ENCODE measurements at regions of chr9 and their contacts with region 1.

Region 1: DNA sequence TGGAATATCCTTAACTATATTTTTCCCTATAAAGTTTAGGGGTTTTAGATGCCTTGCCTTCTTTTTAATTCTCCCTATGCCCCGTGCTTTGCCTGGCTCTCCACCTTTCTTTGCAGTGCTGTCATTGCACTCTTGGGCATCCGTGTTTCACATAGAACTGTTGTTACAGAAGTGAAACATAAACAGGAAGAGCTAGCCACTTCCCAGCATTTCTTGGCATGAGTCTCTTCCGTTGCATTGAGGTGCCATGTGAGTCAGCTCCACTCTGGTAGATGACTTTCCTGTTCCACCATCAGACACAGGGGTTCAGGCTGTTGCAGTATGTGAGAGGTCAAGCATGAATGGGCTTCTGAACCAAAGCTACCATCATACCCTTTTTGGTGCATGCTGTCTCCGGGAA is 73.4 kb downstream of the ANGPTL2 start:
- DNase-seq: peak; percentile 70 to 95
- H3K4me3 ChIP-seq: peak overlapping the region; percentile 38; the same call in 1 of the 2 replicates
- H3K27ac ChIP-seq: peak overlapping the region; percentile 86
- H3K4me1 ChIP-seq: peaks cover 35% of the 10 kb centered on the region
- H3K27me3 ChIP-seq: no peaks in the 10 kb centered on the region
- CTCF ChIP-seq: 0 out of 2 replicates have a peak, but pooled peaks have one; percentile 34

Region 2: GRCh38 chr9:126500684-126501382 is 548.2 kb before region 1 on chr9:
- CTCF ChIA-PET with region 1: no interaction called
- POLR2A ChIA-PET with region 1: no interaction called
- intact Hi-C with region 1: no loop called
- DNase-seq: peak; percentile 42 to 79
- H3K4me3 ChIP-seq: no peak overlapping the region
- H3K27ac ChIP-seq: no peak overlapping the region
- H3K4me1 ChIP-seq: no peaks in the 10 kb centered on the region
- H3K27me3 ChIP-seq: peaks cover 5% of the 10 kb centered on the region; the same call in 1 of the 2 replicates
- CTCF ChIP-seq: peak; percentile 93

Region 3: GRCh38 chr9:126902210-126902609 is 146.8 kb before region 1 on chr9:
- CTCF ChIA-PET with region 1: interaction called, 11 read pairs
- POLR2A ChIA-PET with region 1: no interaction called
- intact Hi-C with region 1: no loop called
- DNase-seq: no peak
- H3K4me3 ChIP-seq: no peak overlapping the region
- H3K27ac ChIP-seq: no peak overlapping the region
- H3K4me1 ChIP-seq: no peaks in the 10 kb centered on the region
- H3K27me3 ChIP-seq: no peaks in the 10 kb centered on the region
- CTCF ChIP-seq: no peak

Region 4: GRCh38 chr9:126947529-126947928 is 101.5 kb before region 1 on chr9:
- CTCF ChIA-PET with region 1: no interaction called
- POLR2A ChIA-PET with region 1: no interaction called
- intact Hi-C with region 1: no loop called
- DNase-seq: peak; percentile 50 to 61
- H3K4me3 ChIP-seq: no peak overlapping the region
- H3K27ac ChIP-seq: no peak overlapping the region
- H3K4me1 ChIP-seq: 0 out of 2 replicates have a peak, but pooled peaks cover 7% of the 10 kb centered on the region
- H3K27me3 ChIP-seq: no peaks in the 10 kb centered on the region
- CTCF ChIP-seq: peak; percentile 64

Region 5: DNA sequence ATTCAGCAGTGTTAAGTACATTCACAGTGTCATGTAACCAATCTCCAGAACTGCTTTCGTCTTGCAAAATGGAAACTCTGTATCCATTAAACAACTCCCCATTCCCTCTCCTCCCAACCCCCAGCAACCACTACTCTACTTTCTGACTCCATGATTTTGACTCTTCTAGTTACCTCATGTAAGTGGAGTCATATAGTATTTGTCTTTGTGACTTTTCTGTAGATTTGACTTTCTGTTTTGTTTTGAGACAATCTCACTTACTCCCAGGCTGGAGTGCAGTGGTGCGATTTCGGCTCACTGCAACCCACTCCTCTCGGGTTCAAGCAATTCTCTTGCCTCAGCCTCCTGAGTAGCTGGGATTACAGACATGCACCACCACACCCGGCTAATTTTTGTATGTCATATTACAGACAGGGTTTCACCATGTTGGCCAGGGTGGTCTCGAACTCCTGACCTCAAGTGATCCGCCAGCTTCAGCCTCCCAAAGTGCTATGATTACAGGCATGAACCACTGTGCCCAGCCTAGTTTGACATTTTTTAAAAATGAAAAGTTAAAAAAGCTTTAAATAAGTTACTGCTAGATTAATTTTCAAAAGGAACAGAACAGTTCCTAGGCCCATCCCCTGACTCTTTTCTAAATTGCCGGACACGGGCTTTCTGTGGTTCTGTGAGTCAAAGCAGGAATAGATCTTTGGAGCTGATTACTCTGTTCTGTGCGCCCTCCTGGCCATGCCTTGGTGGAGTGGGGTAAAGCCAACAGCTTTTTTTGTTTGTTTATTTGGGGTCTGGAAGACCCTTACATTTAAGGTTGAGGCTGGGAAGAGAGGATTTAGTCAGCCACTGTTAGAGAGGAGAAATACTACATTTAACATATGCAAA is 75.2 kb before region 1 on chr9:
- CTCF ChIA-PET with region 1: no interaction called
- POLR2A ChIA-PET with region 1: interaction called, 11 read pairs
- intact Hi-C with region 1: no loop called
- DNase-seq: no peak
- H3K4me3 ChIP-seq: no peak overlapping the region
- H3K27ac ChIP-seq: no peak overlapping the region
- H3K4me1 ChIP-seq: no peaks in the 10 kb centered on the region
- H3K27me3 ChIP-seq: no peaks in the 10 kb centered on the region
- CTCF ChIP-seq: no peak

Region 6: GRCh38 chr9:127014216-127014615 is 34.8 kb before region 1 on chr9:
- CTCF ChIA-PET with region 1: no interaction called
- POLR2A ChIA-PET with region 1: no interaction called
- intact Hi-C with region 1: no loop called
- DNase-seq: no peak
- H3K4me3 ChIP-seq: no peak overlapping the region
- H3K27ac ChIP-seq: no peak overlapping the region
- H3K4me1 ChIP-seq: no peaks in the 10 kb centered on the region
- H3K27me3 ChIP-seq: no peaks in the 10 kb centered on the region
- CTCF ChIP-seq: no peak

Region 7: DNA sequence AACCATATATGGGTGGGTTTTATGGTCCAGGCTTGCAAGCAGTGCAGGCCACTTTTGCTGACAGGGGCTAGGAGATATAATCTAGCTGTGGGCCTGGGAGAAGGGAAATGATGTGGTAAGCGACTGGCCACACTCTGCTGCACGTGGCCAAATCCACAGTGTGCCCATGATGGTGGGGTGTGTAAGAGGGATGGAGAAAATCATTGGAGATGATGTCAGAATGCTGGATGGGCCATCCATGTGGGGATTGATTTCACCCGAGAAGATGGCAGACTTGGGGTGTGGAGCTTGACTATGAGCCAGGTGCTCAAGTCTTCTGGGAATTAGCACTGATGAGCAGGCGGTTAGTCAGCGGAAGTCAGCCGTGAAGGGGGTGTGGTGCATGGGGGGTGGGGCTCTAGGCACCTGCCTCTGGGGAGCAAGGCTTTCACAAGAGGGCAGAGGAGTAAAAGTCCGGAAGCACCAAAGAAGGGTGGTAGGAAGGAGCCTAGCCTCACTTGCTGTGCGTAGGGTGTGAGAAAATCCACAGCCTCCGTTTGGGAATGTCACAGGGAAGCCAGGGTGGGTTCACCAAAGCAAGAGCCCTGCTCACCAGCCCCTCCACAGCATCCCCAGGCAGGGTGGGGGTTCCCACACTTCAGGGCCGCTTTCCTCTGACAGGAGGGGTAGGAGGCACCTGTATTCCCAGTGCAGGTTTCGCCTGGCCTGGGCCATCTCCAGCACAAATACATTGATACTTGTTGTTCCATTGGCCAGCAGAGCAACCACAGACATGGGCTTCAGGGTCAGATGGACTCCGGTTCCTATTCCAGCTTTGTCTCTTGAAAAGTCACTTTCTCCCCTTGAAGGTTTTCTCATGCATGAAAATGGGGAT is 117.8 kb after region 1 on chr9:
- CTCF ChIA-PET with region 1: no interaction called
- POLR2A ChIA-PET with region 1: interaction called, 6 read pairs
- intact Hi-C with region 1: loop called (anchors 1 kb)
- DNase-seq: peak; percentile 65 to 81
- H3K4me3 ChIP-seq: no peak overlapping the region
- H3K27ac ChIP-seq: no peak overlapping the region
- H3K4me1 ChIP-seq: peaks cover 4% of the 10 kb centered on the region; the same call in 1 of the 2 replicates
- H3K27me3 ChIP-seq: no peaks in the 10 kb centered on the region
- CTCF ChIP-seq: no peak

Region 8: DNA sequence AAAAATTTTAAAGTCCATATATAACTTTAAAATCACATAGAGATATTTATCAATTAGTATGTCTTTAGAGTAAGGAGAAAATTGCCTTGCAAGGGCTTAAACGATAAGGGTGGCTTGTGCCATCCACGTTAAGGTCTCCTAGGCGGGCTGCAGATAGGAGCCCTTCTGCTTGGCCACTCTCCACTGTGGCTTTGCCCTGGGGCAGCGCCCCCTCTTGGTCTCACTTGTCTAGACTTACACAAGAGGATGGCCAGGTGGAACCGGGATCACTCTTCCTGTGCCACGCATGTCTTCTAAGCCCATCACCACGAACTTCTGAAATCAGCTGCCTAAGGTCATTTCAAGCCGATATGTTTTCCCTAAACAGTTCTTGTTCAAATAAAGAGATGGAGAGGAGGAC is 756.6 kb after region 1 on chr9:
- CTCF ChIA-PET with region 1: no interaction called
- POLR2A ChIA-PET with region 1: no interaction called
- intact Hi-C with region 1: no loop called
- DNase-seq: no peak
- H3K4me3 ChIP-seq: no peak overlapping the region
- H3K27ac ChIP-seq: no peak overlapping the region
- H3K4me1 ChIP-seq: peaks cover 32% of the 10 kb centered on the region
- H3K27me3 ChIP-seq: no peaks in the 10 kb centered on the region
- CTCF ChIP-seq: no peak; the same call in 1 of the 2 replicates